CD4-positive, alpha-beta memory T cell (primary cell): ENCODE measurements at regions of chr5 and their contacts with region 1.

Region 1: DNA sequence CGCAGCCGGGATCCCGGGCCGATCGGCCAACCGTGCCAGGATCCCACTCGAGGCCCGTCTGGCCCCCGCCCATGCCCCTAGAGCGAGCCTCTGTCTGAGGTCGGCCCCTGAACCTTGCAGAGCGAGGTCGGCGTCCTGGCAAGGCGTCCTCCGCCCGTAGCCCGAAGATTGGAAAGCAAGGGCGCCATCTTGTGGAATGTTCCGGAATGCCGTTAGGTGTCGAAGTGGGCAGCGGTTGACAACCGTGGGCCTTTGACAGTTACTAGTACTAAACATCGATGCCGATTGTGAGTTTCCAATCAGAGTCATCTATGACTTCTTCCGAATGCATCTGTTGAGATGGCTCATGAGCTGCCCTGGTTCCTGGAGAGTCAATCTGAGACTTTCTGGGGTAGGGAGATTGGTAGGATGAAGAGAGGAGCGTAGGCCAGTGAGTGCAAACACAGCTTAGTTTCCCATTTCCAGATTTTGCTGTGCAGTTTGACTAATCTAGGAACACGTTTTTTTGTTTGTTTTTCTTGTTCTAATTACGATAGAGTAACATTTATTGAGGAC is 923 bp upstream of the PLK2 start:
- DNase-seq: peak; percentile 86 to 91 (median 87)
- H3K4me3 ChIP-seq: peak overlapping the region; percentile 1 to 80
- H3K4me3 Mint-ChIP-seq: peak overlapping the region; percentile 77 to 90 (median 88)
- H3K27ac ChIP-seq: peak overlapping the region; percentile 83
- H3K27ac Mint-ChIP-seq: peak overlapping the region; percentile 70 to 95 (median 88)
- H3K4me1 ChIP-seq: peaks cover 12% of the 10 kb centered on the region
- H3K4me1 Mint-ChIP-seq: peaks cover 3 to 16% (median 14%) of the 10 kb centered on the region in 4 donors
- H3K27me3 ChIP-seq: peaks cover 8% of the 10 kb centered on the region
- H3K27me3 Mint-ChIP-seq: peaks cover 0 to 4% of the 10 kb centered on the region in 2 donors

Region 2: GRCh38 chr5:56951946-56952691 is 1508.7 kb before region 1 on chr5 and contains the start of gene MIER3:
- CTCF ChIA-PET with region 1: no interaction called
- POLR2A ChIA-PET with region 1: no interaction called
- intact Hi-C with region 1: loop called (anchors 1 kb)
- DNase-seq: peak; percentile 79 to 83 (median 80)
- H3K4me3 ChIP-seq: peak within 1 kb of the TSS; percentile 57 to 72
- H3K4me3 Mint-ChIP-seq: peak within 1 kb of the TSS; percentile 94 to 98 (median 96)
- H3K27ac ChIP-seq: peak within 1 kb of the TSS; percentile 53
- H3K27ac Mint-ChIP-seq: peak within 1 kb of the TSS; percentile 92 to 96 (median 95)
- H3K4me1 ChIP-seq: peaks cover 16% of the 10 kb centered on the region
- H3K4me1 Mint-ChIP-seq: peaks cover 14 to 25% (median 20%) of the 10 kb centered on the region in 4 donors
- H3K27me3 ChIP-seq: peaks cover 5% of the 10 kb centered on the region
- H3K27me3 Mint-ChIP-seq: peaks cover 6 to 12% of the 10 kb centered on the region in 2 donors
- total RNA-seq, gene MIER3: 27.8 to 32.8 TPM

Region 3: DNA sequence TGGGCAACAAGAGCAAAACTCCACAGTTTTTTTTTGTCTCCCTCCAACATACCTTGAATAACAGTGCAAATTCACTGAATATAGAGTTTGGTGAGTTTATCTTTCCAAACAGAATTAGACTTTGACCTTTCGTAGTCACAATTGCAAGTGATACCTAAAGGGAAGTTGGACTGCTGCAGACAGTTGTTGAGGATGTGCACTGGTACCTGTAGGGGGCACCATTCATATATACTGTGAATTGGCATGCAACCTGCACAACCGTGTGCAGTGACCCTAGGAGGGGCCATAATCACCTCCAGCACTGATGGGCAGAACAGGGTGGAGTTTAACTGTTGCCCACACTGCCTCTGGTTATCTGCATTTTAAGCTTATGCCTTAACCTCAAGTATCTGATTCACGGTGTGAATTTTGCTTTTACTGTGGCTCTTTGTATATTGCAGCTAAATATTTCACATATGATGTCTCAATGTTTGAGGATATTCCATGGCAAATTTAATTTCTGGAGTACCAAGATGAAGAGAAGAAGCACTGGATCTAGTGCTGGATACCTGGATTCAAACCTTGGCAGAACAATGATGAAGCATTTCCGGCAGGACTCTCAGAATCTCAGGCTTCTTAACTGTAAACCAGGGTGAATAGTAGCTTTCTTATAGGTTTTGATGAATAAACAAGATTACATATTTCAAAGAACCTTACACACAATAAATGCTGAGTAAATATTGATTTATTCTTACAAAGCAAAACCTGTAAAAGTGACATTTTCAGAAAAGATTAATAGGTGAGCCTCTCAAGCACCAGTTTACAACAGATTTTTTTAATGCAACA is 1122.5 kb before region 1 on chr5:
- CTCF ChIA-PET with region 1: interaction called, 16 read pairs
- POLR2A ChIA-PET with region 1: no interaction called
- intact Hi-C with region 1: no loop called
- DNase-seq: peak in 2 of 5 donors; percentile 2 to 5
- H3K4me3 ChIP-seq: no peak overlapping the region
- H3K4me3 Mint-ChIP-seq: no peak overlapping the region
- H3K27ac ChIP-seq: no peak overlapping the region
- H3K27ac Mint-ChIP-seq: no peak overlapping the region
- H3K4me1 ChIP-seq: no peaks in the 10 kb centered on the region
- H3K4me1 Mint-ChIP-seq: no peaks in the 10 kb centered on the region
- H3K27me3 ChIP-seq: no peaks in the 10 kb centered on the region
- H3K27me3 Mint-ChIP-seq: no peaks in the 10 kb centered on the region

Region 4: GRCh38 chr5:57499262-57500050 is 961.4 kb before region 1 on chr5:
- CTCF ChIA-PET with region 1: interaction called, 169 read pairs
- POLR2A ChIA-PET with region 1: interaction called, 11 read pairs
- intact Hi-C with region 1: loop called (anchors 1 kb)
- DNase-seq: peak in 4 of 5 donors; percentile 15 to 34 (median 32)
- H3K4me3 ChIP-seq: no peak overlapping the region
- H3K4me3 Mint-ChIP-seq: peak overlapping the region; percentile 63 to 82 (median 74)
- H3K27ac ChIP-seq: no peak overlapping the region
- H3K27ac Mint-ChIP-seq: peak overlapping the region in 5 of 7 donors; percentile 0 to 79 (median 49)
- H3K4me1 ChIP-seq: peaks cover 27% of the 10 kb centered on the region
- H3K4me1 Mint-ChIP-seq: peaks cover 15 to 31% (median 16%) of the 10 kb centered on the region in 4 donors
- H3K27me3 ChIP-seq: no peaks in the 10 kb centered on the region
- H3K27me3 Mint-ChIP-seq: peaks cover 0 to 2% of the 10 kb centered on the region in 2 donors

Region 5: DNA sequence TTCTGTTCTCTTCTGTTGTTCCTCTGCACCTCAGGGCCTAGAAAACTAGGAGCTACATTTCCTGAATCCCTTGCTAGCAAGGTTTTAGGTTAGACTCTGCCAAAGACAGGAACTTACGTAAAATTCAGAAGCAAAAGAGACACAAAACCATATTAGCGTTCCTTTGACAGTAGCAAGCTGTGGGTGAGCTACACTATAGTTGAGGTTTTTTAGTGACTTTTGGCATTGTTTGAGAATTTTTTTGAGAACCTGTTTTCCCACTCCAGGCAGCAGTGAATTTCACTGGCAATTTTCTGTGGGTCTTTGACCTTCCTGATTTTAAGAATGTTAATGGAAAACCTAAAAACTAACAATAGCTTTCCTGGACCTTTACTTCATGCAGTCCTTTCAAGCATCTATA is 36.6 kb before region 1 on chr5:
- CTCF ChIA-PET with region 1: no interaction called
- POLR2A ChIA-PET with region 1: no interaction called
- intact Hi-C with region 1: no loop called
- DNase-seq: no peak
- H3K4me3 ChIP-seq: no peak overlapping the region
- H3K4me3 Mint-ChIP-seq: no peak overlapping the region
- H3K27ac ChIP-seq: no peak overlapping the region
- H3K27ac Mint-ChIP-seq: no peak overlapping the region
- H3K4me1 ChIP-seq: no peaks in the 10 kb centered on the region
- H3K4me1 Mint-ChIP-seq: no peaks in the 10 kb centered on the region
- H3K27me3 ChIP-seq: no peaks in the 10 kb centered on the region
- H3K27me3 Mint-ChIP-seq: peaks cover 0 to 7% of the 10 kb centered on the region in 2 donors

Region 6: DNA sequence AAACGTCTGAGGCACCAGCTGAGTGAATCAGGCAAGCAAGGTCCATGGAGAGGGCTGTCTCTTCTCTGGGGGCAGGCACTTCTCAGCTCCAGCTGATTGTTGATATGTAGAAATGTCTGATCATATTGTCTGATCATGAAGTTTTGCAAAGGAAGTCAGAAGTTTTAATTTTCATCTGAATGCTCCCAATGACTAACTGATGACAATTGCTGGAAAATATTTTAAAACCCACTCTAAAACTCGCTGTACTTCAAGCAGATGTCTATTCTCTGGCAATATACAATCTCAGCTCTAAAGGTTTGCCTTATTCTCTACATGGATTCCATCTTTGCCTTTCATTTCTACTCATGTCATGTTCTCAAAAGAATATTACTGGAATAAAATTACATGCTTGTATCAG is 13.6 kb before region 1 on chr5:
- CTCF ChIA-PET with region 1: interaction called, 13 read pairs
- POLR2A ChIA-PET with region 1: interaction called, 3 read pairs
- intact Hi-C with region 1: no loop called
- DNase-seq: no peak
- H3K4me3 ChIP-seq: no peak overlapping the region
- H3K4me3 Mint-ChIP-seq: no peak overlapping the region
- H3K27ac ChIP-seq: no peak overlapping the region
- H3K27ac Mint-ChIP-seq: no peak overlapping the region
- H3K4me1 ChIP-seq: no peaks in the 10 kb centered on the region
- H3K4me1 Mint-ChIP-seq: no peaks in the 10 kb centered on the region
- H3K27me3 ChIP-seq: no peaks in the 10 kb centered on the region
- H3K27me3 Mint-ChIP-seq: peaks cover 7 to 9% of the 10 kb centered on the region in 2 donors

Region 7: GRCh38 chr5:59007460-59008063 is 546.8 kb after region 1 on chr5:
- CTCF ChIA-PET with region 1: no interaction called
- POLR2A ChIA-PET with region 1: no interaction called
- intact Hi-C with region 1: no loop called
- DNase-seq: peak in 4 of 5 donors; percentile 15 to 33 (median 23)
- H3K4me3 ChIP-seq: no peak overlapping the region
- H3K4me3 Mint-ChIP-seq: no peak overlapping the region
- H3K27ac ChIP-seq: no peak overlapping the region
- H3K27ac Mint-ChIP-seq: peak overlapping the region in 1 of 7 donors; percentile 38
- H3K4me1 ChIP-seq: peaks cover 34% of the 10 kb centered on the region
- H3K4me1 Mint-ChIP-seq: peaks cover 28 to 72% (median 44%) of the 10 kb centered on the region in 4 donors
- H3K27me3 ChIP-seq: no peaks in the 10 kb centered on the region
- H3K27me3 Mint-ChIP-seq: no peaks in the 10 kb centered on the region